B cell (primary cell): ENCODE measurements at regions of chr1 and their contacts with region 1.

Region 1: GRCh38 chr1:204431310-204432165 is 19.9 kb upstream of the PPP1R15B start:
- DNase-seq: peak; percentile 84
- ATAC-seq: peak; percentile 77
- H3K4me3 ChIP-seq: no peak overlapping the region
- H3K4me3 Mint-ChIP-seq: no peak overlapping the region
- H3K27ac ChIP-seq: no peak overlapping the region
- H3K27ac Mint-ChIP-seq: peak overlapping the region; percentile 1
- H3K4me1 ChIP-seq: no peaks in the 10 kb centered on the region
- H3K4me1 Mint-ChIP-seq: no peaks in the 10 kb centered on the region
- H3K27me3 ChIP-seq: no peaks in the 10 kb centered on the region
- H3K27me3 Mint-ChIP-seq: no peaks in the 10 kb centered on the region
- CTCF ChIP-seq: peak; percentile 93

Region 2: DNA sequence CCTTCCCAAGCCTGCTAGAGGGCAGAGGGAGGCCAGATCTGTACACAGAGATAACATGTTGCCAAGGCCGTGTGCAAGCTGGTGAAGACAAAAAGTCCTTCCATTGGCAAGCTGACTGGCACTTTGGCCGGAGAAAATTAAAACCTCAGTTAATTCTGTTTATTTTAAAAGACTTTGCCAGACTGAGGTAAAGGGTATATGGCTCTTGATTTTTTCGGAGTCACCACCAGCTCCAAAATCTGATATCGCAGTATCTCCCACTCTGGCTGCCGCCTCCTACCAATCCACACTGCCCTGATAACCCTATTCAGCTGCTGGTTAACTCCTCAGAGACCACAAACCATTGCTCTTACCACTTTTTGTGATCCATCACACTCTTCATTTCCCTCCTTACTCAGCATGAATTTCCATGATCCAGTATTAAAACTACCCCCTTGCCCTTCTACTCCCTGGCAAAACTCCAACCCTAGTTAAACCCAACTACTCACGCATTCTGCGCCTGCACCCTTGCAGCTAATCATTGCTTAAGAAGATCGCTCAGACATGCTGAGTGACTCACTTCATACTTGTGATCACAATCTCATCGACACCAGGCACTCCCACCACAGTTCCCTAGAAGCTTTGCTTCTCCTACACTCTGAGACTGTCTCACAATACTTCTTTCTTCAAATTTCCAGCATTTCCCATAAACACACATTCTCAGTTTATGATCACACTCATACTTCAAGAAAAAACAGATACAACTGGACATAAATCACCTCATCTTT is 14.1 kb before region 1 on chr1:
- CTCF ChIA-PET with region 1: interaction called, 23 read pairs
- POLR2A ChIA-PET with region 1: interaction called, 3 read pairs
- intact Hi-C with region 1: no loop called
- DNase-seq: no peak
- ATAC-seq: no peak
- H3K4me3 ChIP-seq: no peak overlapping the region
- H3K4me3 Mint-ChIP-seq: peak overlapping the region; percentile 60
- H3K27ac ChIP-seq: peak overlapping the region in 1 of 2 donors; percentile 37
- H3K27ac Mint-ChIP-seq: peak overlapping the region; percentile 83
- H3K4me1 ChIP-seq: peaks cover 25 to 29% of the 10 kb centered on the region in 2 donors
- H3K4me1 Mint-ChIP-seq: peaks cover 44% of the 10 kb centered on the region
- H3K27me3 ChIP-seq: no peaks in the 10 kb centered on the region
- H3K27me3 Mint-ChIP-seq: no peaks in the 10 kb centered on the region
- CTCF ChIP-seq: no peak

Region 3: GRCh38 chr1:204480515-204480914 is 49.0 kb after region 1 on chr1:
- CTCF ChIA-PET with region 1: interaction called, 36 read pairs
- POLR2A ChIA-PET with region 1: no interaction called
- intact Hi-C with region 1: no loop called
- DNase-seq: peak; percentile 73
- ATAC-seq: peak; percentile 53
- H3K4me3 ChIP-seq: peak overlapping the region in 3 of 5 experiments; percentile 26 to 32 (median 32)
- H3K4me3 Mint-ChIP-seq: peak overlapping the region; percentile 71
- H3K27ac ChIP-seq: peak overlapping the region; percentile 78 to 95
- H3K27ac Mint-ChIP-seq: peak overlapping the region; percentile 98
- H3K4me1 ChIP-seq: peaks cover 93 to 94% of the 10 kb centered on the region in 2 donors
- H3K4me1 Mint-ChIP-seq: peaks cover 94% of the 10 kb centered on the region
- H3K27me3 ChIP-seq: no peaks in the 10 kb centered on the region
- H3K27me3 Mint-ChIP-seq: no peaks in the 10 kb centered on the region
- CTCF ChIP-seq: no peak